GM12878 (cell line): ENCODE measurements at regions of chr10 and their contacts with region 1.

Region 1: DNA sequence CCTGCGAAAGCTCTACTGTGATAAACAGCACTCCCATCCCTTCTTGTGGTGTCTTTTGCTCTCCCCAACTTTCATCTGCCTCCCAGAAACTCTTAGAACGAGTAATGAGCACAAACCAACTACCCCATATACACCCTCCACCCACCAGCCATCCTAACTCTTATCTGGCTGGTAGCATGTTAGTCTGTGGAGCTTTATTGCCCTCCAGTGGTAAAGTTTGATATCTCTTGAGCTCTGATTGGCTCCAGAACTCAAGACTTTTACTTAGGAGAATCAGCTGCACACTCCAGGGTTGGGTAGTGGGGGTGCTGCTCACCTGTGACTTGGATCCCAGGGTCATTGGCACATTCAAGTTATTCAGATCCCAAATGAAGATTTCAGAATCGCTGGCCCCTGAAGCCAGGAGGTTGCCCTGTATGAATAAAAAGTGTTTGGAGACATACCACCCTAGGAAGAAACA is 10.9 kb downstream of the SEC31B start:
- DNase-seq: no peak
- ATAC-seq: peak; percentile 94
- H3K4me3 ChIP-seq: no peak overlapping the region
- H3K27ac ChIP-seq: no peak overlapping the region
- H3K4me1 ChIP-seq: peaks cover 8% of the 10 kb centered on the region; the same call in 1 of the 2 replicates
- H3K27me3 ChIP-seq: no peaks in the 10 kb centered on the region
- CTCF ChIP-seq: peak; percentile 34 to 64 (median 51)
- EP300 ChIP-seq: no peak
- POLR2A ChIP-seq: no peak
- RAD21 ChIP-seq: peak; percentile 62

Region 2: DNA sequence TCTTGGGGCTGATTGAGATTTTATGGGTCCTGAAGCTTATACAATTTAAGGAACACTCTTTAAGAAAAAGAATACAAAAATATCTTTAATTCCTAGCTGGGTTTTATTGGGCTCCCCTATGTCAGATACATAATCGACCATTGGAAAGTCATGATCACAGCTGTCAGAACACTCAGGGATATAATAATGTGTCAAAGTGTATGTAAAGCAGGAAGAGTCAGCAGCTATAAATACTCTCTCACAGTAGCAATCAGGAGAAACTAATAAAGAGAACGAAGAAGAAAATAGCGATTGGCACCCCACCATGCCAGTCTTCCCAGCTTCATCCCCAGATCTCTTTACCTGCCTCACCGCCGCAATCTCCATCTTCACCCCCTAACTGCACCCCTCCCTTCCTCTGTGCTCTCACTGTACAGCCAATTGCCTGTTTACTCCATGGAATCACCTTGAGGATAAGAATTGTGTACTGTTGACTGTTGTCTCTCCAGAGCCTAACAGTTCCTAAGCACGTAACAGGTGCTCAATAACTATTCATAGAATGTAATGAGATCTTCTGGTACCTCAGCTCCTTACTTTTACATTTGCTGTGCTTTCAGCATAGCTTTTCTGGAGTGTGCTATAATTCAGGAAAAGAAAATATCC is 69.9 kb before region 1 on chr10:
- CTCF ChIA-PET with region 1: interaction called, 13 read pairs
- POLR2A ChIA-PET with region 1: no interaction called
- RAD21 ChIA-PET with region 1: interaction called, 11 read pairs
- SMC1A ChIA-PET with region 1: interaction called, 11 read pairs
- in situ Hi-C with region 1: loop called (anchors 5 kb)
- intact Hi-C with region 1: loop called (anchors 1 kb)
- DNase-seq: no peak
- ATAC-seq: no peak
- H3K4me3 ChIP-seq: no peak overlapping the region
- H3K27ac ChIP-seq: no peak overlapping the region
- H3K4me1 ChIP-seq: no peaks in the 10 kb centered on the region
- H3K27me3 ChIP-seq: no peaks in the 10 kb centered on the region
- CTCF ChIP-seq: no peak
- EP300 ChIP-seq: no peak
- POLR2A ChIP-seq: no peak
- RAD21 ChIP-seq: no peak

Region 3: DNA sequence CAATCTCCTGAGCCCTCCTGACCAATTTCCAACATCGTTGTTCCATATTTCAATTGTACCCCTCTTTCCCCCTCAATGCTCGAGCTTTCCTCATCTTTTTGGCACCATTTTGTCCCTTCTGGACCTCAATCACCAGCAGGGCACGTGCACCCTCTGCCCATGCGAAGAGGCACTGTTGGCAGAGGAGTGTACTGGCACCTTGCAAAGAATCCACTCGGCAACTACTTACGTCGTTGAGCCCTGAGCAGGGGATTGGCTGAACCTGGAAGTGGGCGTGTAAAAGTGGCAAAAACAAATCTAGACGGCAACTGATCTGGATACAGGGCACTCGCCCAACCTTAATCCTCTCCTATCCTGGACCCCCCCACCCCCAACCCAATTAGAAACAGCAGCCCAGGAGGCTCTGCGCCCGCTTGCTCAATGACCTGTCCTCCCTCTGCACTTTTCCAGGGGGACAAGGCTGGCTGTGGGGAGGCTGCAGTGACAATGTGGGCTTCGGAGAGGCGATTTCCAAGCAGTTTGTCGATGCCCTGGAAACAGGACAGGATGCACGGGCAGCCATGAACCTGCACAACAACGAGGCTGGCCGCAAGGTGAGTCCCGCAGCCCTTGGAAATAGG is 27.1 kb before region 1 on chr10:
- CTCF ChIA-PET with region 1: interaction called, 25 read pairs
- POLR2A ChIA-PET with region 1: no interaction called
- RAD21 ChIA-PET with region 1: no interaction called
- SMC1A ChIA-PET with region 1: no interaction called
- in situ Hi-C with region 1: no loop called
- intact Hi-C with region 1: no loop called
- DNase-seq: peak; percentile 84
- ATAC-seq: peak; percentile 99
- H3K4me3 ChIP-seq: peak overlapping the region; percentile 61; the same call in 1 of the 2 replicates
- H3K27ac ChIP-seq: no peak overlapping the region
- H3K4me1 ChIP-seq: peaks cover 5% of the 10 kb centered on the region
- H3K27me3 ChIP-seq: peaks cover 0 to 6% of the 10 kb centered on the region in 2 experiments; a peak in 1 of 4 replicates
- CTCF ChIP-seq: no peak
- EP300 ChIP-seq: no peak
- POLR2A ChIP-seq: no peak
- RAD21 ChIP-seq: no peak

Region 4: GRCh38 chr10:100496567-100496966 is 12.2 kb before region 1 on chr10:
- CTCF ChIA-PET with region 1: interaction called, 10 read pairs
- POLR2A ChIA-PET with region 1: no interaction called
- RAD21 ChIA-PET with region 1: interaction called, 3 read pairs
- SMC1A ChIA-PET with region 1: interaction called, 4 read pairs
- in situ Hi-C with region 1: no loop called
- intact Hi-C with region 1: no loop called
- DNase-seq: no peak
- ATAC-seq: no peak
- H3K4me3 ChIP-seq: no peak overlapping the region
- H3K27ac ChIP-seq: no peak overlapping the region
- H3K4me1 ChIP-seq: no peaks in the 10 kb centered on the region
- H3K27me3 ChIP-seq: no peaks in the 10 kb centered on the region
- CTCF ChIP-seq: no peak
- EP300 ChIP-seq: no peak
- POLR2A ChIP-seq: no peak
- RAD21 ChIP-seq: no peak

Region 5: GRCh38 chr10:100535715-100536353 is 27.1 kb after region 1 on chr10 and contains the start of gene HIF1AN:
- CTCF ChIA-PET with region 1: interaction called, 15 read pairs
- POLR2A ChIA-PET with region 1: no interaction called
- RAD21 ChIA-PET with region 1: no interaction called
- SMC1A ChIA-PET with region 1: no interaction called
- in situ Hi-C with region 1: no loop called
- intact Hi-C with region 1: no loop called
- DNase-seq: peak; percentile 85
- ATAC-seq: peak; percentile 97
- H3K4me3 ChIP-seq: peak within 1 kb of the TSS; percentile 95
- H3K27ac ChIP-seq: peak within 1 kb of the TSS; percentile 45
- H3K4me1 ChIP-seq: peaks cover 11% of the 10 kb centered on the region
- H3K27me3 ChIP-seq: no peaks in the 10 kb centered on the region
- CTCF ChIP-seq: peak; percentile 94 to 98 (median 94)
- EP300 ChIP-seq: no peak
- POLR2A ChIP-seq: peak; percentile 95
- RAD21 ChIP-seq: no peak
- polyA plus RNA-seq, gene HIF1AN: 1.9 to 2.2 TPM